WTC11 (cell line): ENCODE measurements at regions of chr15 and their contacts with region 1.

Region 1: DNA sequence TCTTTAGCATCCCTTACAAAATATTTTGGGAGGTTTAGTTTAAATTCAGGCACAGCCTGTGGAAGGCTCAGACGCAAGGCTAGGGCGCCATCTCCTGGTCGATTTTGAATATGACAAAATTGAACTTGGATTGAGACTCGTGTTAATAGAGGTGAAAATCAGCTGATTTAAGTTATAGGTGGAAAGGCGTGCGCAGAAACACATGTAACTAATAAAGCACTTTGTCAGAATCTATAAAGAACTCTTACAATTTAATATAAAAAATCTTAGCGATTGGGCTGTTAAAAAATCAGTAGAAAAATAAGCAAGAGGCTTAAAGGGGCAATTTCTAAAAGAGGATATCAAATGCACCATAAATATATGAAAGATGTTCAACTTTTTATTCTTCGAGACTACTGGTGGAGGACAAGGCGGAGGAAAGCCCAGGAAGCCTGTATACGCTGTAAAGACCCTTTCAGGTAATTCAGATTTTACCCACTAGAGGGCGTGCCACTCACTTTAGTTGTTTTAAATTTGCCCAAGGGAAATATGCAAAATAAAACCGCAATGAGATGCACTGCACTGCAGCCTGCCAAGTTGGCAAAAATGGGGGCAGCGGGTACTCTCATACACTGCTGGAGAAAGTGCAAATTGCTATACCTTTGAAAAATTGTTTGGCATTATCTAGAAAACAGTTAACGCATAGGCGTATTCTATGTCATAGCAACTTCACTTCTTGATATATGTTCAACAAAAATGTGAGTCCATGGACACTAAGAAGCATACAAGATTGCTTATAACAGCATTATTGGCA is 64.7 kb downstream of the SLC30A4 start:
- DNase-seq: peak; percentile 62
- ATAC-seq: peak; percentile 81
- H3K4me3 Mint-ChIP-seq: peak overlapping the region; percentile 54
- H3K27ac Mint-ChIP-seq: peak overlapping the region; percentile 91; the same call in 1 of the 2 replicates
- H3K4me1 Mint-ChIP-seq: peaks cover 12% of the 10 kb centered on the region
- H3K27me3 Mint-ChIP-seq: peaks cover 55% of the 10 kb centered on the region
- CTCF ChIP-seq: peak; percentile 83

Region 2: GRCh38 chr15:45205192-45205591 is 252.6 kb before region 1 on chr15:
- CTCF ChIA-PET with region 1: interaction called, 10 read pairs
- POLR2A ChIA-PET with region 1: no interaction called
- DNase-seq: peak; percentile 77
- ATAC-seq: peak; percentile 52
- H3K4me3 Mint-ChIP-seq: no peak overlapping the region
- H3K27ac Mint-ChIP-seq: no peak overlapping the region
- H3K4me1 Mint-ChIP-seq: no peaks in the 10 kb centered on the region
- H3K27me3 Mint-ChIP-seq: peaks cover 19% of the 10 kb centered on the region
- CTCF ChIP-seq: peak; percentile 65

Region 3: GRCh38 chr15:45429974-45430792 is 27.7 kb before region 1 on chr15:
- CTCF ChIA-PET with region 1: interaction called, 10 read pairs
- POLR2A ChIA-PET with region 1: no interaction called
- DNase-seq: peak; percentile 82
- ATAC-seq: peak; percentile 94
- H3K4me3 Mint-ChIP-seq: peak overlapping the region; percentile 57
- H3K27ac Mint-ChIP-seq: no peak overlapping the region
- H3K4me1 Mint-ChIP-seq: 0 out of 2 replicates have a peak, but pooled peaks cover 2% of the 10 kb centered on the region
- H3K27me3 Mint-ChIP-seq: peaks cover 61% of the 10 kb centered on the region
- CTCF ChIP-seq: peak; percentile 100

Region 4: GRCh38 chr15:45611305-45611704 is 153.5 kb after region 1 on chr15:
- CTCF ChIA-PET with region 1: interaction called, 15 read pairs
- POLR2A ChIA-PET with region 1: no interaction called
- DNase-seq: no peak
- ATAC-seq: no peak
- H3K4me3 Mint-ChIP-seq: no peak overlapping the region
- H3K27ac Mint-ChIP-seq: no peak overlapping the region
- H3K4me1 Mint-ChIP-seq: no peaks in the 10 kb centered on the region
- H3K27me3 Mint-ChIP-seq: no peaks in the 10 kb centered on the region
- CTCF ChIP-seq: no peak